Sigmoid colon (tissue), 7 donors: ENCODE measurements at regions of chr9 and their contacts with region 1.

Region 1: DNA sequence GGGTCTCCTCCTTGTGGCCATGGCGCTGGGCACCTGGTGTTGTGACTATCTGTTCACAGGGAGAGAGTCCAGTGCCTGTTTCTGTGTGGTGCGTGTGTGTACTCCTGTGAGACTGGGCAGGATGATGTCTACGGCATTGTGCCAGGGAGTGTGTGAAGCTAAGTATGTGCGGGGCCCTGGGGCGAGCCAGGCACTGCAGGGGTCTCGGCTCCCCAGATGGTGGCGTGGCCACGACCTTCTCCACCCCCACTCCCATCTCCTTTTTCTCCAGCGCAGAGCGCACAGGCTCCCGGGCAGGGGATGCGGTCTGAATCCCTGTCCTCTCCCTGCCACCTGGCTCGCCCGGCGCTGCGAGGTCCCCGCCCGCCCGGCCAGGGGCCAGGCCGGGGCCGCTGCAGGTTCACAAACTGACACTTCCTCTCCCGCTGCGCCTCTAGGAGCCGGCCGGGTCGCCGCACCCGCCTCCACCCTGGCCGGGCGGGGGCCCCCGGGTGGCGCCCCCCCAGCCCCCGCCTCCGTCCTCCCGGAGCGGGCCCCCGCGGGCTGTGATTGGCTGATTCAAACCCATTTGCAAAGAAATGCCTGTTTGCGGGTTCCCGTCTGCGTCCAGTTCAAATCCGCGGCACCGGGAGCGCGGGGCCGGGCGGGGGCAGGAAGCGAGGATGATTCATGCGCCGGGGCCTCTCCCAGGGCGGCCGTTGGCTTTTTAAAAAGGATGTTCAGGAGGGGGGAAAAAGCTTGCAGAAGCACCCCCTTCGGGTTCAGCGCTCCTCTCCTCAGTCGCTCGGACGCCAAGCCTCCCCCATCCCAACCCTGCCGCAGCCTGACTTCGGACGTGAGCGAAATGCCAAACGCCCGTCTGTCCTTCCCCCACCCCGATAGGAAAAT is 790 bp downstream of the PHF19 start:
- DNase-seq: peak; percentile 94
- H3K4me3 ChIP-seq: peak overlapping the region; percentile 73 to 86 (median 80)
- H3K27ac ChIP-seq: peak overlapping the region; percentile 94 to 99 (median 96)
- H3K4me1 ChIP-seq: peaks cover 0 to 16% (median 14%) of the 10 kb centered on the region in 4 donors
- H3K27me3 ChIP-seq: no peaks in the 10 kb centered on the region
- CTCF ChIP-seq: peak in 1 of 4 experiments; percentile 13
- EP300 ChIP-seq: no peak
- POLR2A ChIP-seq: peak in 1 of 2 donors; percentile 24

Region 2: GRCh38 chr9:120783602-120784047 is 92.6 kb before region 1 on chr9:
- intact Hi-C with region 1: no loop called
- DNase-seq: no peak
- H3K4me3 ChIP-seq: no peak overlapping the region
- H3K27ac ChIP-seq: peak overlapping the region in 1 of 4 donors; percentile 27
- H3K4me1 ChIP-seq: peaks cover 0 to 19% (median 11%) of the 10 kb centered on the region in 4 donors
- H3K27me3 ChIP-seq: no peaks in the 10 kb centered on the region
- CTCF ChIP-seq: no peak
- EP300 ChIP-seq: no peak
- POLR2A ChIP-seq: no peak

Region 3: GRCh38 chr9:120928483-120929228 is 52.5 kb after region 1 on chr9:
- intact Hi-C with region 1: loop called (anchors 2 kb)
- DNase-seq: peak; percentile 88
- H3K4me3 ChIP-seq: peak overlapping the region; percentile 72 to 84 (median 76)
- H3K27ac ChIP-seq: peak overlapping the region; percentile 91 to 95 (median 94)
- H3K4me1 ChIP-seq: peaks cover 0 to 39% (median 15%) of the 10 kb centered on the region in 4 donors
- H3K27me3 ChIP-seq: no peaks in the 10 kb centered on the region
- CTCF ChIP-seq: peak in 2 of 4 experiments; percentile 31 to 37
- EP300 ChIP-seq: no peak
- POLR2A ChIP-seq: peak in 1 of 2 donors; percentile 27

Region 4: GRCh38 chr9:120965344-120966012 is 89.3 kb after region 1 on chr9:
- intact Hi-C with region 1: no loop called
- DNase-seq: no peak
- H3K4me3 ChIP-seq: no peak overlapping the region
- H3K27ac ChIP-seq: peak overlapping the region; percentile 34 to 74 (median 58)
- H3K4me1 ChIP-seq: no peaks in the 10 kb centered on the region
- H3K27me3 ChIP-seq: no peaks in the 10 kb centered on the region
- CTCF ChIP-seq: no peak
- EP300 ChIP-seq: no peak
- POLR2A ChIP-seq: no peak

Region 5: GRCh38 chr9:121074635-121075385 is 198.6 kb after region 1 on chr9 and contains the start of gene CNTRL:
- intact Hi-C with region 1: loop called (anchors 10 kb)
- DNase-seq: peak; percentile 95
- H3K4me3 ChIP-seq: peak within 1 kb of the TSS; percentile 63 to 88 (median 74)
- H3K27ac ChIP-seq: peak within 1 kb of the TSS; percentile 84 to 96 (median 91)
- H3K4me1 ChIP-seq: peaks cover 0 to 15% (median 10%) of the 10 kb centered on the region in 4 donors
- H3K27me3 ChIP-seq: no peaks in the 10 kb centered on the region
- CTCF ChIP-seq: no peak
- EP300 ChIP-seq: no peak
- POLR2A ChIP-seq: peak; percentile 17 to 39
- total RNA-seq, gene CNTRL: 10.3 to 13.9 (median 12.5) TPM